MCF 10A (cell line): ENCODE measurements at regions of chr1 and their contacts with region 1.

Region 1: GRCh38 chr1:214123061-214123784 is 135.4 kb downstream of the PROX1 start:
- DNase-seq: peak; percentile 78
- H3K4me3 Mint-ChIP-seq: no peak overlapping the region
- H3K27ac Mint-ChIP-seq: no peak overlapping the region
- H3K4me1 Mint-ChIP-seq: peaks cover 6% of the 10 kb centered on the region
- H3K27me3 Mint-ChIP-seq: no peaks in the 10 kb centered on the region
- CTCF ChIP-seq: peak; percentile 95

Region 2: GRCh38 chr1:213122514-213122929 is 1000.7 kb before region 1 on chr1:
- CTCF ChIA-PET with region 1: interaction called, 106 read pairs
- POLR2A ChIA-PET with region 1: no interaction called
- intact Hi-C with region 1: loop called (anchors 1 kb)
- DNase-seq: peak; percentile 75
- H3K4me3 Mint-ChIP-seq: no peak overlapping the region
- H3K27ac Mint-ChIP-seq: peak overlapping the region; percentile 61
- H3K4me1 Mint-ChIP-seq: peaks cover 26% of the 10 kb centered on the region
- H3K27me3 Mint-ChIP-seq: no peaks in the 10 kb centered on the region
- CTCF ChIP-seq: peak; percentile 74

Region 3: DNA sequence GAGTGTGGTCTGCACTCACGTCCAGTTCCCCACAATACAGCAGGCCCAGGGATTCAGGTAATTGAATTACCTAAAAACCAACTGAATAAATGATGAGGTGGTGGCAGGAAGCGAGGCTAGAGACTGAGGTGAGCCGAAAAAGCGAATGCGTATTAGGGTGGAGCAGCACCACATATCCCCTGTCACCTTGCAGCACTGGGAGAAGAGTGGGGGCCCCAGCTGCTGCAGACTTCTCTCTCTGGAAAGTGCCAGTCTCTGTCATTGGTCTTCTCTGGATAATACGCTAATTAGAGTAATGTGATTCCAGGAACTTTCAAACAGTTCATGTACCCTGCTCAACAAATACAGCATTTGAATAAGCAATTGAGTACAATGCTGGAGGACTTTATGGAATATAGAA is 873.2 kb before region 1 on chr1:
- CTCF ChIA-PET with region 1: interaction called, 27 read pairs
- POLR2A ChIA-PET with region 1: interaction called, 3 read pairs
- intact Hi-C with region 1: no loop called
- DNase-seq: no peak
- H3K4me3 Mint-ChIP-seq: no peak overlapping the region
- H3K27ac Mint-ChIP-seq: no peak overlapping the region
- H3K4me1 Mint-ChIP-seq: no peaks in the 10 kb centered on the region
- H3K27me3 Mint-ChIP-seq: no peaks in the 10 kb centered on the region
- CTCF ChIP-seq: no peak

Region 4: GRCh38 chr1:213564215-213564659 is 559.0 kb before region 1 on chr1:
- CTCF ChIA-PET with region 1: interaction called, 4 read pairs
- POLR2A ChIA-PET with region 1: no interaction called
- intact Hi-C with region 1: loop called (anchors 1 kb)
- DNase-seq: peak; percentile 68
- H3K4me3 Mint-ChIP-seq: no peak overlapping the region
- H3K27ac Mint-ChIP-seq: no peak overlapping the region
- H3K4me1 Mint-ChIP-seq: no peaks in the 10 kb centered on the region
- H3K27me3 Mint-ChIP-seq: peaks cover 17% of the 10 kb centered on the region
- CTCF ChIP-seq: peak; percentile 46

Region 5: GRCh38 chr1:213820362-213821149 is 302.7 kb before region 1 on chr1:
- CTCF ChIA-PET with region 1: interaction called, 5 read pairs
- POLR2A ChIA-PET with region 1: no interaction called
- intact Hi-C with region 1: loop called (anchors 10 kb)
- DNase-seq: peak; percentile 55
- H3K4me3 Mint-ChIP-seq: no peak overlapping the region
- H3K27ac Mint-ChIP-seq: no peak overlapping the region
- H3K4me1 Mint-ChIP-seq: no peaks in the 10 kb centered on the region
- H3K27me3 Mint-ChIP-seq: no peaks in the 10 kb centered on the region
- CTCF ChIP-seq: no peak

Region 6: GRCh38 chr1:213852107-213852506 is 271.1 kb before region 1 on chr1:
- CTCF ChIA-PET with region 1: no interaction called
- POLR2A ChIA-PET with region 1: no interaction called
- intact Hi-C with region 1: no loop called
- DNase-seq: no peak
- H3K4me3 Mint-ChIP-seq: no peak overlapping the region
- H3K27ac Mint-ChIP-seq: no peak overlapping the region
- H3K4me1 Mint-ChIP-seq: no peaks in the 10 kb centered on the region
- H3K27me3 Mint-ChIP-seq: peaks cover 21% of the 10 kb centered on the region
- CTCF ChIP-seq: no peak

Region 7: DNA sequence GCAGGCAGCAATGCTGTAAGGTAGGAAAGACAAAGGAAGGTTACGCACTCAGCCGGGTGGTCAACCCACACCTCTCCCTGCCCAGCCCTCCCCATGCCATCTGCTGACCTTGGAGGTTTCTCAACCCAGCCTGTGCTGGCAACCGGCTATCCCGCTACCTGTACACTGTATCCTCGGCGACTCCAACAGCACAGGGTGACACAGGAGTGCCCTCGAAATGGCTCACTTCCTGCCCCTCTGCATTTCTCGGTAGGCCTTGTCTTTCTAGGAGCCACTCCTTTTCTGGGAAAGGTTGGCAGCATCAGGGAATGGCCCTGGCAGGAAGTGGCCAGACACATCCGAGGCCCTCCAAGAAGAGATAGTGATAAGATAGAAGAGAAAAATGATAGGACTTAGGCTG is 11.4 kb before region 1 on chr1:
- CTCF ChIA-PET with region 1: interaction called, 52 read pairs
- POLR2A ChIA-PET with region 1: no interaction called
- intact Hi-C with region 1: no loop called
- DNase-seq: no peak
- H3K4me3 Mint-ChIP-seq: no peak overlapping the region
- H3K27ac Mint-ChIP-seq: no peak overlapping the region
- H3K4me1 Mint-ChIP-seq: no peaks in the 10 kb centered on the region
- H3K27me3 Mint-ChIP-seq: peaks cover 19% of the 10 kb centered on the region
- CTCF ChIP-seq: no peak

Region 8: DNA sequence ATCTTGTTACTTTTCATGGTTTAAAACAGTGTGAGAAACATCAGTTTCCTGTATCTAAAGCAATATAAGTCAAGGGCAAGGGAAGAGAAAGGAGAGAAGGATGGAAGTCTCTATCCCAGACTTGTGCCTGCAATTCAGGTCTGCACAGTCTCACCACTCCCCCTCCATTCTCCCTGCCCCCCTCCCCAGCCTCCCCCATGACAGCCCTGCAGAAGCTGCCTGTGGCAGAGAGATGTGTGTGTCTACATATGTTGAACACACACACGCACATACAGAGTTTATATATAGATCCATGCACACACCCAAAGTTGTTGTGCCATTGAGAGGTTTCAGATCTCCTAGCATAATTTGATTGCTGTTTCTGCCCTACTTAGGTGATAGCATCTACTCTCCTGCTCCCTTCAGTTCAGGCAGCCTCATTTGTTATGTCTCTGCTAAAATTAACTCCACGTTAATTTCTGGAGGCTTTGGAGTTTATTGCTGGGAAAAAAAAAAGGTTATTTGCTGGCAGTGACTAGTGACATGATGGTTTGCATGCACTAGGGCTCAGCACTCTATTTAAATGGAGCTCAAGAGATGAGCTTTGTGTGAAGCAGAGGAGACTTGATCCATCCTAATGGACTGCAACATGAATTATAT is 32.9 kb after region 1 on chr1:
- CTCF ChIA-PET with region 1: interaction called, 10 read pairs
- POLR2A ChIA-PET with region 1: interaction called, 3 read pairs
- intact Hi-C with region 1: no loop called
- DNase-seq: no peak
- H3K4me3 Mint-ChIP-seq: no peak overlapping the region
- H3K27ac Mint-ChIP-seq: no peak overlapping the region
- H3K4me1 Mint-ChIP-seq: no peaks in the 10 kb centered on the region
- H3K27me3 Mint-ChIP-seq: peaks cover 74% of the 10 kb centered on the region
- CTCF ChIP-seq: no peak

Region 9: GRCh38 chr1:214292322-214292721 is 169.1 kb after region 1 on chr1:
- CTCF ChIA-PET with region 1: no interaction called
- POLR2A ChIA-PET with region 1: no interaction called
- intact Hi-C with region 1: no loop called
- DNase-seq: peak; percentile 64
- H3K4me3 Mint-ChIP-seq: no peak overlapping the region
- H3K27ac Mint-ChIP-seq: no peak overlapping the region
- H3K4me1 Mint-ChIP-seq: peaks cover 21% of the 10 kb centered on the region
- H3K27me3 Mint-ChIP-seq: no peaks in the 10 kb centered on the region
- CTCF ChIP-seq: no peak

Region 10: GRCh38 chr1:214303141-214303930 is 180.1 kb after region 1 on chr1:
- CTCF ChIA-PET with region 1: no interaction called
- POLR2A ChIA-PET with region 1: no interaction called
- intact Hi-C with region 1: no loop called
- DNase-seq: no peak
- H3K4me3 Mint-ChIP-seq: no peak overlapping the region
- H3K27ac Mint-ChIP-seq: no peak overlapping the region
- H3K4me1 Mint-ChIP-seq: no peaks in the 10 kb centered on the region
- H3K27me3 Mint-ChIP-seq: no peaks in the 10 kb centered on the region
- CTCF ChIP-seq: no peak